MCF 10A (cell line): ENCODE measurements at regions of chr3 and their contacts with region 1.

Region 1: DNA sequence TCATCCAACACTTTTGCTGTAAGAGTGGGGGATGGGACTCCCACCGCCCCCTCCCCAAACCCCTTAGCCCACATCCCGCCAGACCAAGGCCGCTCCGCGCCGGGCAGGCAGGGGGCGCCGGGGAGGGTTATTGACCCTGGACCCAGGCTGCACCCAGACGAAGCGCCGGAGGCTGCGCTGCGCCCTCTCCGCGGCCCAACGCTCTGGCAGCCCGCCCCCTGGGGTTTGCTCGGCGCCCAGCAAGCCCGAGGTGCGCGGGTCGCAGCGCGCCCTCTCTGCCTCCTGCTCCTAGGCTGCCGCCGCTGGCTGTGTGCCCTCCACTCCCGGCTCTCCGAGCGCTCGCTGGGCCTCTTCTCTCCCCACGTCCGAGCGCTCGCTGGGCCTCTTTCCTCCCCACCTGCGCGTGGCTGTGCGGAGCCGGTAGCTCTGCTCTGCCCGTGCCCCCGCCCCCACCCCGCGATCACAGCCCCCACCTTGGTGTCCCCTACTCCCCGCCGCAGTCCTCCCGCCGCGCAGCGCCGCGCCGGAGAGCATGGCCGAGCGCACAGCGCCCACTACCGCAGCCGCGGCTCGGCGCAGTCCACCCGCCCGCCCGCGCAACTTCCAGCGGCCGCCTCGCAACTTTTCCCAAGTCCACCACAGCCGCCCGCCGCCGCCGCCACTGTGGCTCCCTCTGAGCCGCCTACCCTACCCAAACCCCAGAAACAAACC is 1.2 kb downstream of the MECOM start:
- DNase-seq: peak; percentile 74
- H3K4me3 Mint-ChIP-seq: peak overlapping the region; percentile 88
- H3K27ac Mint-ChIP-seq: peak overlapping the region; percentile 57
- H3K4me1 Mint-ChIP-seq: no peaks in the 10 kb centered on the region
- H3K27me3 Mint-ChIP-seq: peaks cover 19% of the 10 kb centered on the region
- CTCF ChIP-seq: peak; percentile 53

Region 2: DNA sequence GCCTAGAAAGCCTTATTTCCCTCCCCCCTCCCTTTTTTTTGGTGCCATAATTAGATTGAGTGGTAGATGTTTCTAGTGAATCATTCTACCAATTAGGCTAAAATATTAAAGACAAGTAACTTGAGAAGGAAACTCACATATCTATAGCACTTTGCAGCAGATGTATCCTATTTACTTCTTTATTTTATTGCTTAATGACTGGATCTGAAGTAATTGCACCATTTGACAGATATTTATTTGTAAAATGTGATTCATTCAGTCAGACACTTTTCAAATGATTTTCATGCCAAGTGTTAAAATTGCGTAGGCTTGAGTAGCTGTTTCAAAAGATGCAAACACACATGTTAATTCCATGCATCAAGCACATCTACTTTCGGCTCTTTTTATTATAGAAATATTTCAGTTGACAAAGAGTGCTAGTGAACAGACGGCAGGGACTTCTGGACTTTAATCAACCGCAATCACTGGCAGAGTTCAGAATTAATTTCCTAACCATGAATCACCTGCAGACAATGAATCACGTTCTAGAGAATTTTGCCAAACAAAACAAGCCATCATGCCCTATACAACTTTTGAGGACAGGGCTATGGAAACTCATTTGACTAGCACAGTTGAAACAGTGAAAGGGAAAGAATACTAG is 635.6 kb before region 1 on chr3:
- CTCF ChIA-PET with region 1: no interaction called
- POLR2A ChIA-PET with region 1: no interaction called
- intact Hi-C with region 1: loop called (anchors 5 kb)
- DNase-seq: peak; percentile 96
- H3K4me3 Mint-ChIP-seq: peak overlapping the region; percentile 68
- H3K27ac Mint-ChIP-seq: peak overlapping the region; percentile 71
- H3K4me1 Mint-ChIP-seq: peaks cover 11% of the 10 kb centered on the region
- H3K27me3 Mint-ChIP-seq: no peaks in the 10 kb centered on the region
- CTCF ChIP-seq: no peak

Region 3: GRCh38 chr3:169133178-169134161 is 528.8 kb before region 1 on chr3:
- CTCF ChIA-PET with region 1: interaction called, 56 read pairs
- POLR2A ChIA-PET with region 1: interaction called, 4 read pairs
- intact Hi-C with region 1: no loop called
- DNase-seq: peak; percentile 33
- H3K4me3 Mint-ChIP-seq: no peak overlapping the region
- H3K27ac Mint-ChIP-seq: peak overlapping the region; percentile 6
- H3K4me1 Mint-ChIP-seq: peaks cover 5% of the 10 kb centered on the region
- H3K27me3 Mint-ChIP-seq: no peaks in the 10 kb centered on the region
- CTCF ChIP-seq: peak; percentile 49

Region 4: DNA sequence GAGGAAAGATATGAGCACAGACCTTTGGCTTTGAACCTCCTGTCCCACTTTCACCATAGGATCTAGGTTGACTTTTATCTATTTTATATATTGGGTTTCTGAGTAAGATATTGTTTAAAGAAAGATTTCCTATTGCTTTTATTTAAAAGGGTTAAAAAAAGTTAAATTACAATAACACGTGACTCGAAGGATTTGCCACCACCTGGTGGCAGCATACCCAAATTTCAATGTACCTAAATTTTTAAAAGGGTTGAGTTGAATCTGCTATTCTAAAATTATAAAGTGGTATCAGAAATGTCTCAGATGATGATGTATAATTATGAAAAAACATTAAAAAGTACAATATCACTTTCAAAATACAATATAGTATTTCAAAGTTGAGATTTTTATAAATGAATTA is 367.2 kb before region 1 on chr3:
- CTCF ChIA-PET with region 1: interaction called, 6 read pairs
- POLR2A ChIA-PET with region 1: no interaction called
- intact Hi-C with region 1: loop called (anchors 1 kb)
- DNase-seq: peak; percentile 33
- H3K4me3 Mint-ChIP-seq: no peak overlapping the region
- H3K27ac Mint-ChIP-seq: no peak overlapping the region
- H3K4me1 Mint-ChIP-seq: no peaks in the 10 kb centered on the region
- H3K27me3 Mint-ChIP-seq: no peaks in the 10 kb centered on the region
- CTCF ChIP-seq: peak; percentile 52

Region 5: DNA sequence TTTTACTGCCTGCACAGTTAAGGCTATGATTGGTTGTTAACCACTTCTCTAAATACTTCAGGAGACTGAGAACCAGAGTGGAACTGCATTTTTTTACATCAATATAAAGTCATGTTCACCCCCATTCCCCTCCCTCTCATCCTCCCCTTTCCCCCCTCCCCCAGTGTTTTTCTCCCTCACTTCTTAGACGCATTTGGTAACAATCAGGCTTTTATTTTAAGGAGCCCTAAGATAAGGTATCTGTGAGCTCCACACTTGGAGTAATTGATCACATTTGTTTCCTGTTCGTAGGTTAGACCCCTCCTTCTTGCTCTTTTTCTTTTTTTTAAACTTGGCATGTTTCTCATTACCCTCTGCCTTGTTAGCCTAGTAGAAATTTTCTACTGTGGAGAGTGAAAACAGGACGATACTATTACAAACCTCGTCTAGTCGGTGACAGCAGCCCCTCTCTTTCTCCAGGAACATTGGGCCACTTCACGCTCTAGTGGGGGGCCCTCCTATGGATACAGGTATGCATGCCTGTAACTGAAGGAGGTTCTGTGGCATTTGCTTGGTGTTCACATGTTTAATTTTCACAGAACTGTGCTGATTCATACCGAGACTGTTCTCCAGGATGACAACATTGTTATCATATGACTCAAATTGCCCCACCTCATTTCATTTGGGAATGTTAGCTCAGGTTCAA is 313.2 kb before region 1 on chr3:
- CTCF ChIA-PET with region 1: no interaction called
- POLR2A ChIA-PET with region 1: no interaction called
- intact Hi-C with region 1: loop called (anchors 5 kb)
- DNase-seq: peak; percentile 75
- H3K4me3 Mint-ChIP-seq: peak overlapping the region; percentile 61
- H3K27ac Mint-ChIP-seq: peak overlapping the region; percentile 98
- H3K4me1 Mint-ChIP-seq: peaks cover 31% of the 10 kb centered on the region
- H3K27me3 Mint-ChIP-seq: no peaks in the 10 kb centered on the region
- CTCF ChIP-seq: no peak

Region 6: GRCh38 chr3:169390271-169391230 is 271.7 kb before region 1 on chr3:
- CTCF ChIA-PET with region 1: interaction called, 4 read pairs
- POLR2A ChIA-PET with region 1: no interaction called
- intact Hi-C with region 1: loop called (anchors 1 kb)
- DNase-seq: peak; percentile 21
- H3K4me3 Mint-ChIP-seq: no peak overlapping the region
- H3K27ac Mint-ChIP-seq: no peak overlapping the region
- H3K4me1 Mint-ChIP-seq: no peaks in the 10 kb centered on the region
- H3K27me3 Mint-ChIP-seq: no peaks in the 10 kb centered on the region
- CTCF ChIP-seq: peak; percentile 9

Region 7: DNA sequence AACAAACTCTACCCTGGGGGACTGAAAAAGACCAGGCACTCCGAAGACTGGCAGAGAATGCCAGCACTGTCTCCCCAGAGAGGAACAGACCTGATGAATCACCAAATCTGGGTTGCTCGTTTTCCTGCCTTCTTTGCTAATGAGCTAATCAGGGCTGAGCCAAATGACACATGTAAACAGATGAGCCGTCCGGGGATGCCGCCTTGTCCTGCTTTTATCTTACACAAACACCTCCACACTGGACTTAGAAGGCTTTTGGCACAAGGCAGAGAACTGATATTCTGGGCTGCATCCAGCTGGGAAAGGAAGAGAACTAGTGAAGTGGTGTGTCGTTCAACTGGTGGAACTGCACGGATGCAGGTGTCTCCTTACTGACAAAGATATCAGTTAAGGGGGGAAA is 86.9 kb before region 1 on chr3:
- CTCF ChIA-PET with region 1: interaction called, 3 read pairs
- POLR2A ChIA-PET with region 1: no interaction called
- intact Hi-C with region 1: loop called (anchors 5 kb)
- DNase-seq: peak; percentile 74
- H3K4me3 Mint-ChIP-seq: peak overlapping the region; percentile 22
- H3K27ac Mint-ChIP-seq: no peak overlapping the region
- H3K4me1 Mint-ChIP-seq: peaks cover 8% of the 10 kb centered on the region
- H3K27me3 Mint-ChIP-seq: no peaks in the 10 kb centered on the region
- CTCF ChIP-seq: no peak